PC-9 (cell line): ENCODE measurements at regions of chr17 and their contacts with region 1.

Region 1: DNA sequence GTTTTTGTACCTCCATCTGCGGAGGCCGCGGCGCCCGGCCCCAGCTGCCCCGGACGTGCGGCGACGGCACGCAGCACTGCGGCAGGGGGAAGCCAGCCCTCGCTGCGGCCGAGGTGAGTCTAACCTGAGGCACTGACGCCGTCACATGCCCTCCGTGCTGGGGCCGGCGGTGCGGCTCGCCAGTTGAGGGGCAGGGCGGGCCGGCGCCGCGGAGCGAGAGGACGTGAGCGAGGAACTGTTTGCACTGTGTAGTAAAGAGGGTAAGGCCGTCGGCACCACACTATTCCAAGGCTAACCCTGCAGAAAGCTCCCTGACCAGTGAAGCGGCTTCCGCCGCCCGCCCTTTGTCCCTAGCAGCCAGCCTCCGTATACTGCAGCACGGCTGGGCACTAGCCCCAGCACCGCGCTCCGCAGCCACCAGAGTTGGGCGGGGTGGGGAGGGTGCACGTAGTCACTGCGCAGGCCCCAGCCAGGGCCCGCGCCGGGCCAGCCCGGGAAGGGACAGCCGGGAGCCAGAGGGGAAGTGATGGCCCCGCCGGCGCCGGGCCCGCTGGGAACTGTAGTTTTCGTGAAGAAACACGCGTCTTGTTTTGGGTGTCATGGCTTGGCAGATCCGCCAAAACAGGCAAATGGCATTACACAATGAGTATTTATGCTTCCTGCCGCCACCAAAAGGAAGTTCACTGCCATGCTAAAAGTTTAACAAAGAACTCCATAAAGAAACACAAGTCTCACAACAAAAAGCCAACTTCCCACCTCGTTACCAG is 580 bp upstream of the KANSL1 start:
- DNase-seq: peak; percentile 89 to 90
- H3K4me3 ChIP-seq: peak overlapping the region; percentile 98
- H3K27ac ChIP-seq: peak overlapping the region; percentile 66
- H3K4me1 ChIP-seq: peaks cover 30% of the 10 kb centered on the region
- H3K27me3 ChIP-seq: no peaks in the 10 kb centered on the region
- CTCF ChIP-seq: no peak; the same call in 1 of the 2 replicates

Region 2: DNA sequence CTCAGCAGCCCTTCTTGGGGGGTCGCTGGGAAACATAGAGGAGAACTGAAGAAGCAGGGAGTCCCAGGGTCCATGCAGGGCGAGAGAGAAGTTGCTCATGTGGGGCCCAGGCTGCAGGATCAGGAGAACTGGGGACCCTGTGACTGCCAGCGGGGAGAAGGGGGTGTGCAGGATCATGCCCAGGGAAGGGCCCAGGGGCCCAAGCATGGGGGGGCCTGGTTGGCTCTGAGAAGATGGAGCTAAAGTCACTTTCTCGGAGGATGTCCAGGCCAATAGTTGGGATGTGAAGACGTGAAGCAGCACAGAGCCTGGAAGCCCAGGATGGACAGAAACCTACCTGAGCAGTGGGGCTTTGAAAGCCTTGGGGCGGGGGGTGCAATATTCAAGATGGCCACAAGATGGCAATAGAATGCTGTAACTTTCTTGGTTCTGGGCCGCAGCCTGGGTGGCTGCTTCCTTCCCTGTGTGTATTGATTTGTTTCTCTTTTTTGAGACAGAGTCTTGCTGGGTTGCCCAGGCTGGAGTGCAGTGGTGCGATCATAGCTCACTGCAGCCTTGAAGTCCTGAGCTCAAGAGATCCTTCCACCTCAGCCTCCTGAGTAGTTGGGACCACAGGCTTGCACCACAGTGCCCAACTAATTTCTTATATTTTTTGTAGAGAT is 191.4 kb before region 1 on chr17:
- CTCF ChIA-PET with region 1: no interaction called
- POLR2A ChIA-PET with region 1: no interaction called
- intact Hi-C with region 1: loop called (anchors 5 kb)
- DNase-seq: peak; percentile 52 to 65
- H3K4me3 ChIP-seq: no peak overlapping the region
- H3K27ac ChIP-seq: no peak overlapping the region
- H3K4me1 ChIP-seq: no peaks in the 10 kb centered on the region
- H3K27me3 ChIP-seq: no peaks in the 10 kb centered on the region
- CTCF ChIP-seq: peak; percentile 98

Region 3: DNA sequence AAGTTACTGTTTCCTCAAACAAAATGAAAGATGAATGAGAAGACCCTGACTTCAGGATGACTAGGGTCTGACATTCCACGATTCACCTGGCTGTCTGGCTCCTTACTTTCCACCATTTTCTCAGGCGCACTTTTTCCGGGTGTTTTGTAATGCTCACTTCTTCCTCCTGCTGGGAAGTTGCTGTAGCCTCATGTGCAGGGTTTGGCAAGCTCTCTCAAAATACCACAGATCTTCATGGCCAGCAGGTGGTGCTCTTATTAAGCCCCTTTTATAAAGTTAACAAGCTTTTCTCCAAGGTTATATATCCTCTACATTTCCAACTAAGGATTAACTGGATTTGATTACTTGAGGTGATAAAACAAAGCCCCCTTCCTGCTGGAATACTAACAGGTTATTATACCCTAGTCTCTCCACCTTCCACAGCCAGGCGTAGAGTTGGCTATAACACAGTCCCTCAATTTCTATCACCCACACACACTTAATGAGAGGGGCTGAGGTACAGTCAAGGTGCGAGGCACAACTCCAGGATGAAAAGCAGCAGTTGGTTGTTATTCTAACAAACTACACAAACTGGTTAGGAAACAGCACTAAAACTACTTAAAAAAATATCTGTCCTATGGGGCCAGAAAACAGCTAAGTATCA is 149.4 kb before region 1 on chr17:
- CTCF ChIA-PET with region 1: interaction called, 12 read pairs
- POLR2A ChIA-PET with region 1: no interaction called
- intact Hi-C with region 1: loop called (anchors 5 kb)
- DNase-seq: peak; percentile 55 to 77
- H3K4me3 ChIP-seq: no peak overlapping the region
- H3K27ac ChIP-seq: no peak overlapping the region
- H3K4me1 ChIP-seq: no peaks in the 10 kb centered on the region
- H3K27me3 ChIP-seq: no peaks in the 10 kb centered on the region
- CTCF ChIP-seq: peak; percentile 86

Region 4: DNA sequence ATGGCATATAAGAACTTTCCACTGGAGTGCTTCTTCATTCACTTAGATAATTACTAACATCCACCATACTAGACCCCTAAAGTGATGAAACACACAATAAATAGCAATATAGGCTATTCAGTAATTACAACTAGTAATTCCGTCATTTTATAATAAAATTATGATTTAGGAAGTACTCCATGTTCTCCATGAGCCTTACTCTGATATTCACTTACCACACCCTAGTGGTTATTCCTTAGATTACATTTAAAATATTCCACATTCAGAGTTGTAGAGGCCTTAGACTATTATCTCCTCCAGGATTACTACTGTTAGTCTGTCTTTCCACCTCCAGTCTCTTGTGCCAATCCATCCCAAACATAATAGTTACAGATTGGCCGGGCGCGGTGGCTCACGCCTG is 132.4 kb before region 1 on chr17:
- CTCF ChIA-PET with region 1: interaction called, 4 read pairs
- POLR2A ChIA-PET with region 1: no interaction called
- intact Hi-C with region 1: loop called (anchors 5 kb)
- DNase-seq: no peak
- H3K4me3 ChIP-seq: no peak overlapping the region
- H3K27ac ChIP-seq: no peak overlapping the region
- H3K4me1 ChIP-seq: peaks cover 12% of the 10 kb centered on the region
- H3K27me3 ChIP-seq: no peaks in the 10 kb centered on the region
- CTCF ChIP-seq: peak; percentile 59

Region 5: DNA sequence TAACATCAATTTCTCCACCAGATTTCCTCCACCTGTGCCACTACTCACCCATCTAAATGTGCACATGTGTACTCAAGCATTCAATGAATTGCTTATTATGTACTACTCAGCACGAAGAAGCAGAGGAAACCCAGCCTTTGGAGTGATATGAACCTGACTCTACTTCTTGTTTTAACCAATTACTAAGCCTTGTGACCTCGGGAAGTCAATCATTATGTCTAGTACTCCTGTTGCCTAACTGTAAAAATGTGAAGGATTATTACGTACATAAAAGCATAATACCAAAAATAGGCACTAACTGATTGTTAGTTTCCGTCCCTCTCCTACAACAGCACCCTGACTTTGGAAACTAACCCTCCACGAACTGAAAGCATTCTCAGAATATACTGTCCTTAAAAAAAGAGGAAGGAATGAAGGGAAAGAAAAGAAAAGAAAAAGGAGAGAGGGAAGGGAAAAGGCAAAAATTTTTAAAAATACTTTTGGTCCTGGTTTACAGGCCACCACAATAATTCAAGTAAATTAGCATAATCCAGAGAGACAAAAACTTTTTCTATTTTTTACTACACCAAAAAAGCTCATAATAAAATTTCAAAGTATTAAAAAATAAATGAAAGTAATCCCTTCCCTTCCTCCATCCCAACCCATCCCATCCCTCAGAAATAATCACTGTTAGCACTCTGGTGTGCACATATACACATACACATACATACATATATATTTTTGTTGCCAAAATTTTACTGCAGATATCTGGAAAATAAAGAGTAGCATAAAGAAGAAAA is 54.2 kb before region 1 on chr17:
- CTCF ChIA-PET with region 1: no interaction called
- POLR2A ChIA-PET with region 1: no interaction called
- intact Hi-C with region 1: no loop called
- DNase-seq: no peak
- H3K4me3 ChIP-seq: no peak overlapping the region
- H3K27ac ChIP-seq: no peak overlapping the region; the same call in 1 of the 2 replicates
- H3K4me1 ChIP-seq: 0 out of 2 replicates have a peak, but pooled peaks cover 4% of the 10 kb centered on the region
- H3K27me3 ChIP-seq: no peaks in the 10 kb centered on the region
- CTCF ChIP-seq: no peak

Region 6: DNA sequence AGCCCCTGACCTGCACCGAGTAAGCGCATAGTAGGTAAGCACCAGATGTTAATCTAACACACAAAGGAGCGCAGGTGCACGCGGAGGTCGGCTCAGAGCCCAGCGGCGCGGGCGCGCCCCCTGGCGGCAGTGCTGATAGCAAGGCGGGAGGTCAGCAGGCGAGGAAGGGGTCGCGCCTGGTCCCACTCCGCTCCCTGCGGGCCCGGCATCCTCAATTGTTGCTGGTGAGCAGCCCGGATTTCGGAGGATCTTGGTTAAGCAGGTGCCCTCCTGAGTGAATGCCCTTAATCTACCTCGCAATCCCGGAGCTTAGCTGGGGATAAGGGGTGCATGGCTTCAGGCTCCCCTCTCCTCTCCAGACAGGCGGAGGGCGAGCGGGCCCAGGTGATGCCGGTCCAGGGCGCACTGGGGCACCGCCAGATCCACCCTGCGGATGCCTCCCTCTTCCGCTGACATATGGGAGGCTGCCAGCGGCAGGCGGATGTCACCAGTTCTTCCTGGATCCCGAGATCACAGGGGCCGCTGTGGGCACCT is 628.6 kb after region 1 on chr17:
- CTCF ChIA-PET with region 1: interaction called, 15 read pairs
- POLR2A ChIA-PET with region 1: no interaction called
- intact Hi-C with region 1: no loop called
- DNase-seq: no peak
- H3K4me3 ChIP-seq: no peak overlapping the region
- H3K27ac ChIP-seq: no peak overlapping the region
- H3K4me1 ChIP-seq: peaks cover 8% of the 10 kb centered on the region; the same call in 1 of the 2 replicates
- H3K27me3 ChIP-seq: peaks cover 14% of the 10 kb centered on the region; the same call in 1 of the 2 replicates
- CTCF ChIP-seq: peak; percentile 75